Endothelial cell of umbilical vein (primary cell): ENCODE measurements at regions of chr2 and their contacts with region 1.

Region 1: GRCh38 chr2:182186132-182186735 is 200.6 kb downstream of the PPP1R1C start:
- DNase-seq: peak; percentile 67
- H3K4me3 ChIP-seq: no peak overlapping the region
- H3K27ac ChIP-seq: no peak overlapping the region
- H3K4me1 ChIP-seq: no peaks in the 10 kb centered on the region
- H3K27me3 ChIP-seq: no peaks in the 10 kb centered on the region
- CTCF ChIP-seq: peak; percentile 25 to 32
- POLR2A ChIP-seq: no peak

Region 2: GRCh38 chr2:181573140-181573736 is 613.0 kb before region 1 on chr2:
- CTCF ChIA-PET with region 1: interaction called, 10 read pairs
- POLR2A ChIA-PET with region 1: no interaction called
- dilution Hi-C with region 1: no loop called
- intact Hi-C with region 1: no loop called
- DNase-seq: peak; percentile 38
- H3K4me3 ChIP-seq: no peak overlapping the region
- H3K27ac ChIP-seq: no peak overlapping the region
- H3K4me1 ChIP-seq: no peaks in the 10 kb centered on the region
- H3K27me3 ChIP-seq: peaks cover 4 to 12% of the 10 kb centered on the region in 2 experiments
- CTCF ChIP-seq: peak; percentile 18 to 31
- POLR2A ChIP-seq: no peak

Region 3: GRCh38 chr2:182210669-182211068 is 24.4 kb after region 1 on chr2:
- CTCF ChIA-PET with region 1: no interaction called
- POLR2A ChIA-PET with region 1: no interaction called
- dilution Hi-C with region 1: no loop called
- intact Hi-C with region 1: no loop called
- DNase-seq: no peak
- H3K4me3 ChIP-seq: no peak overlapping the region
- H3K27ac ChIP-seq: no peak overlapping the region
- H3K4me1 ChIP-seq: no peaks in the 10 kb centered on the region
- H3K27me3 ChIP-seq: no peaks in the 10 kb centered on the region
- CTCF ChIP-seq: no peak
- POLR2A ChIP-seq: no peak

Region 4: DNA sequence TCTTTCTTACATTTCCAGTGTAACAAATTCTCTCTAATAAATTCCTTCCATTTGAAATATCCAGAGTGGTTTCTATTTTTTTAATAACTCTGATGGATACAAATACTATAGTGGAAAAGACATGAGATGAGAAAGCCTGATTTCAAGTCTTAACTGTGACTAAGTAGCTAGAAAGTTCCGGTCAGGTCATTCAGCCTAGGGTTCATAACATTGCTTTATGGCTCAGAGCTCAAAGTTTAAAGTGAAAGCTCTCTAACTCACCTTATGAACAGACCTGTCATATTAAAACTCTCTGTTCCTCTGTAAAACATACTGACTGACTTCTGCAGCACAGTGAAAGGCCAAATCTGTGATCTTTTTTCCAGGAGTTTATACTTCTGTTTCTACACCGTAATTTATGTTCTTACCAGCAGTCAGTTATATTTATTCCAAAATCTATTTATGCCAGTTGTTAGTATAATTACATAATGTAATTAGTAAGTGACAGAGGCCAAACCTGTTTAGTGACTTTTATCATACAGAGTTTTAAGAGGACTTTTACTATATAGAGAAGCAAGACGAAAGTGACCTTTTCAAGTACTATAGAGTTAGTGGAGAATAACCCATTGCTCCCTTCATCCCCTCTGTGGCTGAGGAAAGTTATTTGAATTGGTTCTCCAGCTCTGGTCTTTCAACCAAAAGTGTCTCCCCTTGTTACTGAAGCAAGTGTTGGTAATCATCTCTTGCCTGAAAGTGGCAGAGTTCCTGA is 359.4 kb after region 1 on chr2:
- CTCF ChIA-PET with region 1: no interaction called
- POLR2A ChIA-PET with region 1: no interaction called
- dilution Hi-C with region 1: no loop called
- intact Hi-C with region 1: no loop called
- DNase-seq: peak; percentile 65
- H3K4me3 ChIP-seq: no peak overlapping the region
- H3K27ac ChIP-seq: peak overlapping the region; percentile 22
- H3K4me1 ChIP-seq: peaks cover 53% of the 10 kb centered on the region
- H3K27me3 ChIP-seq: no peaks in the 10 kb centered on the region
- CTCF ChIP-seq: no peak
- POLR2A ChIP-seq: no peak

Region 5: DNA sequence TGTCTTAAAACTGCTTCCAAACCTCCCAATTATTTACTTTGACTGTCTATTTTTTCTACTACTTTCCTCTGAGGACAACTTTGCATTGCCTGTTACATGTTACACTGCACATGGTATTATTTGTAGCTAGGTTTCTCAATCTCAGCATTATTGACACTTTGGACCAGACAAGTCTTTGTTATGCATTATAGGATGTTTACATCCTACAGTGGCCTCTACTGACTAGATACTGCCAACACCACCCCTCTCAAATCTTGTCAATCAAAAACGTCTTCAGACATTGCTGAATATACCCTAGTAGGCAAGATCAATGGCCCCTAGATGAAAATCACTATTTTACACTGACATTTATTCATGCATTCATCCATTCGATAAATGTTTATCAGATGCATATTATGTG is 400.2 kb after region 1 on chr2:
- CTCF ChIA-PET with region 1: interaction called, 11 read pairs
- POLR2A ChIA-PET with region 1: no interaction called
- dilution Hi-C with region 1: no loop called
- intact Hi-C with region 1: no loop called
- DNase-seq: no peak
- H3K4me3 ChIP-seq: no peak overlapping the region
- H3K27ac ChIP-seq: no peak overlapping the region
- H3K4me1 ChIP-seq: no peaks in the 10 kb centered on the region
- H3K27me3 ChIP-seq: no peaks in the 10 kb centered on the region
- CTCF ChIP-seq: no peak
- POLR2A ChIP-seq: no peak

Region 6: DNA sequence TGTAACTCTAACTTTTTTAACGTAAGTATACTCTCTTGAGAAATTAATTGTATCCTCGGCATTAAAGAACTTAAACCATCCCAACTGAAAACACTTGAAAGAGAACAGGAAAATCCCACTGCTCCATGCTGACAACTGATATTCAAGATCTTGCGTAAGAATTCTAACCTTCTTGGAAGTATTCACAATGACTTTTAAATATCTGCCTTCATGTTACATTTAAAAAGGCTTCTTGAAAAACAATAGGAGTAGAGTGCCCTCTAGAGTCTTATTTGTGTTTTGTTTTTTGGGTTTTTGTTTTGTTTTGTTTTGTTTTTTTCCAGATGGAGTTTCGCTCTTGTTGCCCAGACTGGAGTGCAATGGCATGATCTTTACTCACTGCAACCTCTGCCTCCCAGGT is 464.5 kb after region 1 on chr2:
- CTCF ChIA-PET with region 1: interaction called, 203 read pairs
- POLR2A ChIA-PET with region 1: no interaction called
- dilution Hi-C with region 1: no loop called
- intact Hi-C with region 1: loop called (anchors 1 kb)
- DNase-seq: peak; percentile 67
- H3K4me3 ChIP-seq: no peak overlapping the region
- H3K27ac ChIP-seq: no peak overlapping the region
- H3K4me1 ChIP-seq: no peaks in the 10 kb centered on the region
- H3K27me3 ChIP-seq: no peaks in the 10 kb centered on the region
- CTCF ChIP-seq: peak; percentile 15 to 30
- POLR2A ChIP-seq: no peak

Region 7: DNA sequence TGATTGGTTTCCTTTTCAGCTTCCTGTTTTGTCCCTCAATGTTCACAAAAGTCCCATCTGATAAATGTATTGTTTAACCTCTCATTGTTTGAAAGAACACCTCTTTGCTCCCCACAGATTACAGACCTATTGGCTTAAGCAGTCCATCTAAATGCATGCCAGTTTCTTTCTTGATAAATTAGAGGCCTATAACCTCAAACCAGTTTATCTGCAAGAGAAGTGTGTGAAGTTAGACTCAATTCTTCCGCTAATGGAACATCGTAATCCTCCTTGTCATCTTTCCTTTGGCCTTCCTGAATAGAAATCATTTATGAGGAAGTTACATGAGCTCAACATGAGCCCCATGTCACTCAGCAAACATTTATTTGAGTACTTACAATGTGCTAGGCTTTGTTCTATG is 606.2 kb after region 1 on chr2:
- CTCF ChIA-PET with region 1: no interaction called
- POLR2A ChIA-PET with region 1: no interaction called
- dilution Hi-C with region 1: no loop called
- intact Hi-C with region 1: no loop called
- DNase-seq: peak; percentile 53
- H3K4me3 ChIP-seq: no peak overlapping the region
- H3K27ac ChIP-seq: no peak overlapping the region
- H3K4me1 ChIP-seq: peaks cover 8% of the 10 kb centered on the region
- H3K27me3 ChIP-seq: peaks cover 0 to 4% of the 10 kb centered on the region in 2 experiments
- CTCF ChIP-seq: no peak
- POLR2A ChIP-seq: no peak

Region 8: DNA sequence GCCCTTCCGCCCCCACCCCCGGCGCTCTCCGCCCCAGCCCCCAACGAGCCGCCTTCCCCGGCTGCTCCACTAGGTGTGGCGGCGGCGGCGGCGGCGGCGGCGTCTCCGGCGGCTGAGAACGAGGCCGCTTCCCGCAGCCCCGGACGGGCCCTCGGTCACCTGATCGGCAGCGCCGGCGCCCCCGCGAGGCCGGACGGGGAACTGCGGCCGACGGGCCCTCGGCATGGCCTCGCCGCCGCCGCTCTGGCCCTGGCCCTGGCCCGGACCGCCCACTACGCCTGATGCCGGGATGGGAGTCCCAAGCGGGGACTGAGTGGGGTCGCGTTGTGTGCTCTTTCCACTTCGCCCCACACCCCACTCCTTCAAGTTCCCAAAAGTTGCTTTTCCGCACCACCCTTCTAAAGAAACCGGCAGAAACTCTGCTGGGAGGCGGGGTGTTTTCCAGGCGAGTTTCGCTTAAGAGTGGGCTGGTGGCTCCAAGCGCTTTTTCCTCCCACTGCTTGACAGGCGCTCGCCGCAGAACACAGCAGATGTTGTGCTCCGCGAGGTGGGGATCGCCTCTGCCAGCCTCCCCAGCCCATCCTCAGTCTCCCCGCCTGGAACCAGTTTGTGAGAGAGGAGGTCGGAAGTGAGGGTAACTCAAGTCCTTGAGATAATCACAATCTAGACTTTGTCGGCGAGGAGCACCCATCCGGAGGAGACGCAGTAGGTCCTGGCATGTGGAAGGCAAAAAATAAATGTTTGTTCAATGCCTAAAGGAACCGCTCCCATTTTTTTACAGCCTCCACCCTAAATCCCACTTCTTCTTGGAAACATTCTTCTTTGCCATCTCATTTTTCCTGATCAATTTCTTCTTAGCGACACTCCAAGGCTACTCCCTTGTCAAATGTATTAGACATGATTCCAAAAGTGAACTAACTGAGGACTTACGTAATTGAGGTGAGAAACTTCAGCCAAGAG is 852.4 kb after region 1 on chr2 and contains the start of gene NCKAP1:
- CTCF ChIA-PET with region 1: no interaction called
- POLR2A ChIA-PET with region 1: no interaction called
- dilution Hi-C with region 1: no loop called
- intact Hi-C with region 1: loop called (anchors 5 kb)
- DNase-seq: peak; percentile 88
- H3K4me3 ChIP-seq: peak within 1 kb of the TSS; percentile 86 to 99 (median 98)
- H3K27ac ChIP-seq: peak within 1 kb of the TSS; percentile 91
- H3K4me1 ChIP-seq: peaks cover 28% of the 10 kb centered on the region
- H3K27me3 ChIP-seq: peaks cover 5 to 7% of the 10 kb centered on the region in 2 experiments
- CTCF ChIP-seq: peak; percentile 68 to 83
- POLR2A ChIP-seq: no peak
- total RNA-seq, gene NCKAP1: 121 and 130 TPM in 2 replicates